Posterior vena cava (tissue), 2 donors: ENCODE measurements at regions of chr1 and their contacts with region 1.

Region 1: GRCh38 chr1:65067491-65068201 is 80.4 kb upstream of the AK4 start:
- DNase-seq: peak; percentile 88

Region 2: DNA sequence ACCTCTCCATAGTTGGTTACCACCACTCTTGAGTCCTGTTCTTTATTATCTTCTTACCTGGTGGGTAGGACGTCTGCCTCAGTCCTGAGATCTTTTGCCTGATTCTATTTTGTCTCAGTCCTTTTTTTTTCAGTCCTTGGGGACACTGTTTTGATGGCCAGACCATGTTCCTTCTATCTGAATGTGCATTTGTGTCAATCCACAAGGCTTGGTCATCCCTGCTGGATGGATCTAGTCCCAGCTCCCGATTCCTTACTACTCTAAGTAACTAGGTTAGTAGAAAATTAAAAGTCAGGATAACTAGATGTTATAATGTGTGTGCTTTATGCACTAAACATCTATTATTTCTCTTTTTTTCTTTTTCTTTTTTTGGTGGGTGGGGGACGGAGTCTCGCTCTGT is 52.3 kb after region 1 on chr1:
- intact Hi-C with region 1: no loop called
- DNase-seq: no peak

Region 3: GRCh38 chr1:65148548-65149350 is 81.1 kb after region 1 on chr1:
- intact Hi-C with region 1: loop called in 1 of 2 experiments (anchors 10 kb)
- DNase-seq: peak; percentile 90

Region 4: GRCh38 chr1:65209005-65209885 is 141.6 kb after region 1 on chr1:
- intact Hi-C with region 1: loop called in 1 of 2 experiments (anchors 10 kb)
- DNase-seq: no peak